ENCODE measurements at regions of chr18 and their contacts with region 1.

Region 1: GRCh38 chr18:74370115-74370514 is 54.5 kb downstream of the C18orf63 start:
- DNase-seq: no peak
- H3K4me3 ChIP-seq: no peak overlapping the region
- H3K4me3 Mint-ChIP-seq: no peak overlapping the region
- H3K27ac ChIP-seq: no peak overlapping the region
- H3K27ac Mint-ChIP-seq: peak overlapping the region in 1 of 8 donors; percentile 35
- H3K4me1 ChIP-seq: peaks cover 52% of the 10 kb centered on the region
- H3K4me1 Mint-ChIP-seq: peaks cover 29 to 52% (median 51%) of the 10 kb centered on the region in 3 donors
- H3K27me3 ChIP-seq: no peaks in the 10 kb centered on the region
- H3K27me3 Mint-ChIP-seq: peaks cover 18 to 19% of the 10 kb centered on the region in 2 donors

Region 2: GRCh38 chr18:74597662-74598349 is 227.7 kb after region 1 on chr18 and contains the start of gene ZNF407:
- CTCF ChIA-PET with region 1: no interaction called
- POLR2A ChIA-PET with region 1: interaction called, 21 read pairs
- DNase-seq: peak; percentile 78 to 93 (median 89)
- H3K4me3 ChIP-seq: peak within 1 kb of the TSS; percentile 89
- H3K4me3 Mint-ChIP-seq: peak within 1 kb of the TSS; percentile 91 to 99 (median 95)
- H3K27ac ChIP-seq: peak within 1 kb of the TSS; percentile 94
- H3K27ac Mint-ChIP-seq: peak within 1 kb of the TSS; percentile 96 to 100 (median 98)
- H3K4me1 ChIP-seq: peaks cover 31% of the 10 kb centered on the region
- H3K4me1 Mint-ChIP-seq: peaks cover 42 to 80% (median 75%) of the 10 kb centered on the region in 3 donors
- H3K27me3 ChIP-seq: no peaks in the 10 kb centered on the region
- H3K27me3 Mint-ChIP-seq: peaks cover 0 to 3% of the 10 kb centered on the region in 2 donors
- total RNA-seq, gene ZNF407: 14.9 to 15.5 TPM

Region 3: GRCh38 chr18:74669136-74669798 is 299.2 kb after region 1 on chr18:
- CTCF ChIA-PET with region 1: no interaction called
- POLR2A ChIA-PET with region 1: no interaction called
- DNase-seq: no peak
- H3K4me3 ChIP-seq: no peak overlapping the region
- H3K4me3 Mint-ChIP-seq: no peak overlapping the region
- H3K27ac ChIP-seq: no peak overlapping the region
- H3K27ac Mint-ChIP-seq: peak overlapping the region in 3 of 8 donors; percentile 7 to 43 (median 37)
- H3K4me1 ChIP-seq: no peaks in the 10 kb centered on the region
- H3K4me1 Mint-ChIP-seq: peaks cover 0 to 11% (median 10%) of the 10 kb centered on the region in 3 donors
- H3K27me3 ChIP-seq: no peaks in the 10 kb centered on the region
- H3K27me3 Mint-ChIP-seq: no peaks in the 10 kb centered on the region

Measured in CD8-positive, alpha-beta memory T cell (primary cell).